ENCODE measurements at regions of chr1 and their contacts with region 1.

Region 1: DNA sequence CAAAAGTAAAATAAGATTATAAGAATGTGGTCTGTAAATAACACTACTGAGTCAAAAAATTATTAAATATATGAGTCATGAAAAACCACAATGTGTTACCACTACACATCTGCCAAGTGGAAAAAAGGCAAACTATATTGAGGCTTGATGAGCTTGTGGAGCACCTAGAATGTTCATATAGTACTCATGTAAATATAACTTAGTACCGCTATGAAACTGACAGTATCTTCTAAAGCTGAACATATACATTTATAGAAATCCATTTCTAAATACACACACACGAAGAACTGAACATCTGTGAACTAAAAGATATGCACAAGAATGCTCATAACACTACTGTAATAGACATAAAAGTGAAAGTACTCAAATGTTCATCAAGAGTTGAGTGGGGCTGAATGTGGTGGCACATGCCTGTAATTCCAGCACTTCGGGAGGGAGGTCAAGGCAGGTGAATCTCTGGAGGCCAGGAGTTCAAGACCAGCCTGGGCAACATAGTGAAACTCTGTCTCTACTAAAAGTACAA is 18.5 kb upstream of the GBP3 start:
- DNase-seq: peak; percentile 66
- H3K4me3 Mint-ChIP-seq: no peak overlapping the region
- H3K27ac Mint-ChIP-seq: peak overlapping the region; percentile 70
- H3K4me1 Mint-ChIP-seq: peaks cover 41% of the 10 kb centered on the region
- H3K27me3 Mint-ChIP-seq: peaks cover 13% of the 10 kb centered on the region

Region 2: DNA sequence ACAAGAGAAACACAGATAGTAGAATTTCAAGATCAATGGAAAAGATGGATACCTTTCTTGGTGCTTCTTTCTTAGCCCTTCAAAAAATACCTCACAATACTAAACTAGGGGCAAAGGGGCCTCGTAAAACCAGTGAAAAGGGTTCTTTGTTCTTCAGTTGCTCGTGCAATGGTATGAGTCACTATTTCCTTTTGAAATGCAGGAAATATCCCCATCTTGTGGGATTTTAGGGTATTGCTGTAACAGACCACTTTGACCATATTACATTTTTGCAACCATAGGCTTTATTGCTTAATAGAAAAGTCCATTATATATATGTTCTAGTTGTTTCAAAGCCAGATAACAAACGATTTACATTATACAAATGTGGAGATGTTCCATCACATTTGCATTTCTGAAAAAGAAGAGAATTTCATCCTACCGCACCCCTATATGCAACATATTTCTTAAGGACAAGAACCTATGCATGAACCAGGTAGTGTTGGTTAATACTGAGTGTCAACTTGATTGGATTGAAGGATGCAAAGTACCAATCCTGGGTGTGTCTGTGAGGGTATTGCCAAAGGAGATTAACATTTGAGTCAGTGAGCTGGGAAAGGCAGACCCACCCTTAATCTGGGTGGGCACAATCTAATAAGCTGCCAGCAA is 445.7 kb before region 1 on chr1:
- CTCF ChIA-PET with region 1: no interaction called
- POLR2A ChIA-PET with region 1: no interaction called
- intact Hi-C with region 1: no loop called
- DNase-seq: no peak
- H3K4me3 Mint-ChIP-seq: no peak overlapping the region
- H3K27ac Mint-ChIP-seq: no peak overlapping the region
- H3K4me1 Mint-ChIP-seq: no peaks in the 10 kb centered on the region
- H3K27me3 Mint-ChIP-seq: peaks cover 2% of the 10 kb centered on the region

Region 3: DNA sequence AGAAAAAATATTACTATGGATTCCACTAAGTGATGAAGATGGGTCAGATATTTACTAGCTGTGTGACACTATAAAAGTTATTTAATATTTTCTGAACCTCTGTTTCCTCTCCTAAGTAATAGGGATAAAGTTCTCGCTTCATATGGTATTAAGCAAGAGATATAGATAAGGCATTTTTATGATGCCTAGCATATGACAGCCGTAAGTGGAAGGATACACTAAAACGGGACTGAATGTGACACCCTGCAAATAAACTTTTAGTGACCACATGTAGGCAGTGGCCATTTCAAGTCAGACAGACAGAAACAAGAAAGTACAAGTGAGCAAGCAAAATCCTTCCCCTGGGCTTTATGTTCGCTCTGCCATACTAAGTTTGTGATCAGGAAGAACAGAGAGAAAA is 32.7 kb before region 1 on chr1:
- CTCF ChIA-PET with region 1: no interaction called
- POLR2A ChIA-PET with region 1: no interaction called
- intact Hi-C with region 1: no loop called
- DNase-seq: no peak
- H3K4me3 Mint-ChIP-seq: no peak overlapping the region
- H3K27ac Mint-ChIP-seq: no peak overlapping the region
- H3K4me1 Mint-ChIP-seq: peaks cover 7% of the 10 kb centered on the region
- H3K27me3 Mint-ChIP-seq: no peaks in the 10 kb centered on the region

Region 4: DNA sequence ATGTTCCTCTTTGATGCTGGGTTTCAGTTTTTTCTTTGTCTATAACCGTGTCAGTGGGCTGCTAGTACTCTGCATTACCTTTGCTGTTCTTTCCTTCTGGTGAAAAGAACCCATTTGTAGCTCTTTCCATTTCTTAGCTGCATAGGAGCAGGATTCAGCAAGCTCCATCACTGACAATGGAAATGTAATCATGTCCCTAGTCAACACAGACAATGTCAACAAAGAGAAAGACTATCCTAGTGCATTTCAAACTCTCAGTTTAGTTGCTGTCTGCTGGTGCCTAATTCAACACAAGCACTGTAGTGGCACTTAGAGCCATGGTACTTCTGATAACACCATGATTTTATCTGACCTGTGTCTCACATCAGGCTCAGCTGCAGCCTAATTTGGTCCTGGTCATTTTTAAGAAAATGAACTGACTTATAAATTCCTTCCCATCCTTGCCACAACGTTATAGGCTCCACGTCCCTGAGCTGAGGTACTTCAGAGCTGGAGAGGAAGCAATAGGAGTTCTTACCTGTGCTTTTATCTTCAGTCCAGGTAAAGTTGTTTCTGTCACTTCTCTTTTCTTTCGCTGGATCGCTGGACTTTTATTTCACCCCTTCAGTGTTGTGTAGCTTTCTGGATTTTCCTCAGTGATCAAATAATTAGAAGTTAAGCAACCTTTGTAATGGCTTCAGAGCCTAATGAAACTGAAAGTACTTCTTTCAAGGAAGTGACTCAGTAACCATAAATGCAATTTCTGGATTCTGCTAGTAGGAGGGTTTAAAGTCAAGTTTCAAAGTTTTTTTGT is 18.8 kb before region 1 on chr1 and contains the start of gene GBP3:
- CTCF ChIA-PET with region 1: interaction called, 10 read pairs
- POLR2A ChIA-PET with region 1: interaction called, 8 read pairs
- intact Hi-C with region 1: loop called (anchors 1 kb)
- DNase-seq: no peak
- H3K4me3 Mint-ChIP-seq: peak within 1 kb of the TSS; percentile 76
- H3K27ac Mint-ChIP-seq: peak within 1 kb of the TSS; percentile 69
- H3K4me1 Mint-ChIP-seq: peaks cover 52% of the 10 kb centered on the region
- H3K27me3 Mint-ChIP-seq: peaks cover 2% of the 10 kb centered on the region
- total RNA-seq, gene GBP3: 4.5 to 5.7 TPM

Region 5: DNA sequence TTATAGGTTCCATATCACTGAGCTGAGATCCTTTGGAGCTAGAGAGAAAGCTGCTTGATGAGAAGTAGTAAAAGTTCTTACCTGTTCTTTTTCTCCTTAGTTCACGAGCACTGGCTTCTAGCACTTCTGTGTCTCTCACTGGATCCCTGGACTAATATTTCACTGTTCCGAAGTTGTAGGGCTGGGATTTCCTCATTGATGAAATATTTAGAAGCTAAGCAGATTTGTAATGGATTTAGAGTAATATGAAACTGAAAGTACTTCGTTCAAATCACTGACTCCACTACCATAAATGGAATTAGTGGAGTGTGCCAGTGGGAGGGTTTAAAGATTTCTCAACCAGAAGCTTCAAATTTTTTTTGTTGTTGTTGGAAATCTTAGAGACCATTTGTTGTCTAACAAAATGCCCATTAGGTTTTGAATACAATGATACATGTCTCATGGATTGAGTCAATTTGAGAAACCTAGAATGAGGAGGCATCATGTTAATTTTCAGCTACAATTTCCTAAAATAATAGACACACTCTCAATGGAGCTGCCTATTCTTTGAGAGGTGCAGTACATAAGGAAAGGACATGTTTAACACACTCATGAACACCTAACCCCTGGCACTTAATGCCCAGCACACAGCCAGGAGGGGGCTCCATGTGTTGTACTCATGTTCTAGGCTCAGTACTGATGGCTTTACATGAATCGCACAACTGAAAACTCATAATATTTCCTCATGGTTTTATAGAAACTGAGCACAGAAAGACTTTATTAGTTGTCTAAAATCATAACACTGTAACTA is 24.1 kb after region 1 on chr1 and contains the start of gene GBP1:
- CTCF ChIA-PET with region 1: interaction called, 4 read pairs
- POLR2A ChIA-PET with region 1: interaction called, 8 read pairs
- intact Hi-C with region 1: loop called (anchors 1 kb)
- DNase-seq: no peak
- H3K4me3 Mint-ChIP-seq: peak within 1 kb of the TSS; percentile 87
- H3K27ac Mint-ChIP-seq: peak within 1 kb of the TSS; percentile 91
- H3K4me1 Mint-ChIP-seq: peaks cover 56% of the 10 kb centered on the region
- H3K27me3 Mint-ChIP-seq: no peaks in the 10 kb centered on the region
- total RNA-seq, gene GBP1: 66.9 to 67.9 TPM

Region 6: DNA sequence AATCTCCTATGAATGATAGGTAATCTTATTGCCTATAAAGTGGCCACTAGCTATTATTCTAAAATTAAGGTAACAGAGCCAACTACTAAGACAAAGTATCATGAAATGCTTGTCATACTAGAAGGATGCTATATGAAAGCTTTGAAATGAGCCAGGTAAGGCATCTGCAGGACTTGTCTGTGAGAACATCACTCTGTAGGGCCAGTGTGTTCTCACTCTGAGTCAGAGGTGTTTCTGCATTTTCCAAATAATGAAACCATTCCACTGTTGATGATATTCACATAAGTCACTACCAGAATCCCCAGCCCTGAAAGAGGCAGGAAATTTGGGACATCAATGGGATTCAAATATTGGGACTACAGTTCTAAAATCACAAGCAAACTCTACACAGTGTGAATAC is 257.3 kb after region 1 on chr1:
- CTCF ChIA-PET with region 1: no interaction called
- POLR2A ChIA-PET with region 1: no interaction called
- intact Hi-C with region 1: loop called (anchors 1 kb)
- DNase-seq: no peak
- H3K4me3 Mint-ChIP-seq: no peak overlapping the region
- H3K27ac Mint-ChIP-seq: no peak overlapping the region
- H3K4me1 Mint-ChIP-seq: peaks cover 63% of the 10 kb centered on the region
- H3K27me3 Mint-ChIP-seq: no peaks in the 10 kb centered on the region

Region 7: DNA sequence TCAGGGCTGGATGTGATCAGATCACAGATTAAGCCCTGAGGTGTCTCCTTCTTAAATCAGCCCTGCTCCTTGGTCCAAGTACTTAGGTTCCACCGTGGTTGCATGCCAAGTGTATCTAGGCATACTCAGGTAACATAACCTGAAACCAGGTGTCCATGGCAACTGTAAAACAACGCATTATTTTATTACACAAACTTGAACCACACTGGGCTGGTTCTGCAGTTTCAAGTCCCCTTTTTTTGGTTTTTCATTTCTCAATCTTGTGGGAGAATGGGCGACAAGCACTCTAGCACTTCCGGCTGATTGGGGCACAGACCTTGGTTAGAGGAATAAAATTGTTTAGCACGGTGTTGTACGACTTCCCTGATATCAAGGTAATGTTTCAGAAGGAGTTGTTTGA is 387.9 kb after region 1 on chr1:
- CTCF ChIA-PET with region 1: interaction called, 7 read pairs
- POLR2A ChIA-PET with region 1: no interaction called
- intact Hi-C with region 1: loop called (anchors 1 kb)
- DNase-seq: no peak
- H3K4me3 Mint-ChIP-seq: no peak overlapping the region
- H3K27ac Mint-ChIP-seq: no peak overlapping the region
- H3K4me1 Mint-ChIP-seq: peaks cover 21% of the 10 kb centered on the region
- H3K27me3 Mint-ChIP-seq: no peaks in the 10 kb centered on the region

Region 8: DNA sequence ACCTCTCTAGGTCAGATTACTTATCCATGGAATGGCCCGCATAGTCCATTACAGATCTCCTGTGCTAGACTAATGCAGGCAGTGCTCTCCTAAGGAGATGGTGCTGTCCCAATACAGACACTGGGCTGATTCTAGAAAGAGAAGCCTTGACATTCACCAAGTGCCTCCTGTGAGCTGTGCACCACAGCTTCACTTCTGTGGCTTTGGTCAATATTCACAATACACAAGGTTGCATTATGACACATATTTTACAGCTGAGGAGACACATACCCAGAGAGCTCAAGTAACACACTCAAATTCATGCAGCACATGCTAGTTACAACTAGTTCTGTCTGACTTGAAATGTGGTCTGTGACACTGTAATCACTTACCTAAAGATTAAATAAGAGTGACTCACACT is 424.0 kb after region 1 on chr1:
- CTCF ChIA-PET with region 1: no interaction called
- POLR2A ChIA-PET with region 1: no interaction called
- intact Hi-C with region 1: loop called (anchors 2 kb)
- DNase-seq: peak; percentile 55
- H3K4me3 Mint-ChIP-seq: no peak overlapping the region
- H3K27ac Mint-ChIP-seq: peak overlapping the region; percentile 47
- H3K4me1 Mint-ChIP-seq: peaks cover 20% of the 10 kb centered on the region
- H3K27me3 Mint-ChIP-seq: peaks cover 44% of the 10 kb centered on the region

Region 9: GRCh38 chr1:89538361-89538760 is 497.2 kb after region 1 on chr1:
- CTCF ChIA-PET with region 1: no interaction called
- POLR2A ChIA-PET with region 1: no interaction called
- intact Hi-C with region 1: loop called (anchors 5 kb)
- DNase-seq: peak; percentile 31
- H3K4me3 Mint-ChIP-seq: no peak overlapping the region
- H3K27ac Mint-ChIP-seq: peak overlapping the region; percentile 92
- H3K4me1 Mint-ChIP-seq: peaks cover 83% of the 10 kb centered on the region
- H3K27me3 Mint-ChIP-seq: no peaks in the 10 kb centered on the region